ENCODE measurements at regions of chr6 and their contacts with region 1.

Region 1: GRCh38 chr6:17932330-17932852 is 55.0 kb downstream of the KIF13A start:
- DNase-seq: peak; percentile 51
- ATAC-seq: peak; percentile 90

Region 2: DNA sequence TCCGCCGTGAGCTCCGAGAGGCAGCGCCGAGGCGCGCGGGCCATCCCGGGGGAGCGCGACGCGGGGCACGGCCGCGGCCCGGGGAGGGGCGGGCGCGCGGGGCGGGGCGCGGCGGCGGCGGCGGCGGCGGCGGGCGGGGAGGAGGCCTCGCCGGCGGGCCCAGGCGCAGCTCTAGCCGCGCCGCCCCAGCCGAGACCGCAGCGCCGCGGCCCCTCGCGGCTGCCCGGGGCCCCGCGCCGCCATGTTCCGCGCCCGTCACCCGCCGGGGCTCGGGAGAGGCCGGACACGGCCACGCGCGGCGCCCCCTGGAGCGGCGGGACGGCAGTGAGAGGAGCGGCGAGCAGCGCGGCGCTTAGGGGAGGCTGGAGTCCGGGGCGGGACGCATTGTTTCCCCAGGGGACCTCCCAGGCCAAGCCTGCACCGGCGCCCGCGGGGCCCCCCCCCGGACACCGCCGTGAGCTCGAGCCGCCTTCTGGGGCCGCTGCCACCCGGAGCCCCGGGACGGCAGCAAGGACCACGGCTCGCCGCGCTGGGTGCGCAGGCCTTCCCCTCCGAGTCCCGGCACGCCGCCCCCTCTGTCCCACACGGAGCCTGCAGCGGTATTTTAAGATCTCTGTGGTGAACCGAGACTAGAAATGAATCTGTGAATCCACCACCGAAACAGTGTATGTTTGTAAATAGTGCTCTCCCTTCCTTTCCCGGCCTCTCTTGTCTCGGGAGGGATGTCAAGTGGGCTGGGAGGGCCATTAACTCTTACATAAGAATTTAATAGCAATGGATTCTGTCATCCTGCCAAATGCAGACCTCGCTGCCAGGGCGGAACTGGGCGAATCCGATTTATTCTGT is 55.4 kb after region 1 on chr6 and contains the start of gene KIF13A:
- intact Hi-C with region 1: loop called (anchors 10 kb)
- DNase-seq: peak; percentile 86
- ATAC-seq: peak; percentile 80
- total RNA-seq, gene KIF13A: 59.5 TPM

Region 3: GRCh38 chr6:19415585-19416326 is 1483.4 kb after region 1 on chr6:
- intact Hi-C with region 1: no loop called
- DNase-seq: no peak
- ATAC-seq: no peak

Measured in left ventricle myocardium superior (tissue), 1 donor.